Mammary epithelial cell (primary cell): ENCODE measurements at regions of chr20 and their contacts with region 1.

Region 1: GRCh38 chr20:3059489-3059888 is 11.9 kb upstream of the OXT start:
- DNase-seq: no peak
- H3K4me3 ChIP-seq: no peak overlapping the region
- H3K27ac ChIP-seq: no peak overlapping the region
- H3K4me1 ChIP-seq: no peaks in the 10 kb centered on the region
- H3K27me3 ChIP-seq: no peaks in the 10 kb centered on the region
- CTCF ChIP-seq: no peak

Region 2: GRCh38 chr20:2507464-2507863 is 552.0 kb before region 1 on chr20:
- CTCF ChIA-PET with region 1: no interaction called
- dilution Hi-C with region 1: no loop called
- in situ Hi-C with region 1: no loop called
- intact Hi-C with region 1: no loop called
- DNase-seq: no peak
- H3K4me3 ChIP-seq: peak overlapping the region in 2 of 3 experiments; percentile 73 to 84
- H3K27ac ChIP-seq: peak overlapping the region; percentile 43
- H3K4me1 ChIP-seq: peaks cover 7% of the 10 kb centered on the region
- H3K27me3 ChIP-seq: no peaks in the 10 kb centered on the region
- CTCF ChIP-seq: no peak

Region 3: GRCh38 chr20:3010985-3011723 is 48.3 kb before region 1 on chr20:
- CTCF ChIA-PET with region 1: no interaction called
- dilution Hi-C with region 1: no loop called
- in situ Hi-C with region 1: no loop called
- intact Hi-C with region 1: no loop called
- DNase-seq: peak; percentile 68
- H3K4me3 ChIP-seq: no peak overlapping the region
- H3K27ac ChIP-seq: no peak overlapping the region
- H3K4me1 ChIP-seq: peaks cover 9% of the 10 kb centered on the region
- H3K27me3 ChIP-seq: no peaks in the 10 kb centered on the region
- CTCF ChIP-seq: no peak

Region 4: DNA sequence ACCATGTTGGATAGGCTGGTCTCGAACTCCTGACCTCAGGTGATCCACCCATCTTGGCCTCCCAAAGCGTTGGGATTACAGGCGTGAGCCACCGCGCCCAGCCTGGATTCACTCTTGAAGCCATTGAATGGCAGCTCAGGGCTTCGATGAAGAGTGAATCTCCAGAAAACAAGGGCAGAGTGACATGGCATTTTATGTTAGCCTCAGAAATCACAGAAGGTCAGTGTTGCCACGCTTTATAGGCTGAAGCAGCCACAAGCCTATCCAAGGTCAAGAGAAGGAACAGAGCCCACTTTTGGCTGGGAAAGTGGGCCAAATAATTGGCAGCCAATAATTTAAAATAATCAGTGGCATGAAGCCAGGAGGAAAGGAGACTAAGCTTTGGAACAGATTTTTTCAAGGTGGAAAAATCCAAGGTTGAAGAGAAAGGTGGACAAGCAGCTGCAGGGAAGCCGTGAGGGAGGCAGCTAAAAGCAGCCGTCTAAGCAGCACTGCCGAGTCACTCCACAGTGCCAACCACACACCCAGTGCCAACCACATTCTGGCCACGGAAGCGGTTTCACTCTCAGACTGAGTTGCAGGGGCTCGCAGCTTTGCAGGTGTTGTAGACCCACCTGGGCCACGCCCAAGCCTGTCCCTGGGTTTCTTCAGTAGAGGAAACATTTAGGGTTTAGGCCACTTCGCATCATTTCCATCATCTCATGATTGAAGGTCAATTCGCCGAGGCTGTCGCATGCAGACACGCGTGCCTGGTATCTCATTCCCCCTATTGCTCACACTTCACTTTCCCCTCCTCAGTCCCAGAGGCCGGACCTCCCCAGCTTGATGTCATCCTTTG is 42.5 kb after region 1 on chr20:
- CTCF ChIA-PET with region 1: interaction called, 7 read pairs
- dilution Hi-C with region 1: loop called (anchors 5 kb)
- in situ Hi-C with region 1: no loop called
- intact Hi-C with region 1: no loop called
- DNase-seq: no peak
- H3K4me3 ChIP-seq: no peak overlapping the region
- H3K27ac ChIP-seq: no peak overlapping the region
- H3K4me1 ChIP-seq: no peaks in the 10 kb centered on the region
- H3K27me3 ChIP-seq: no peaks in the 10 kb centered on the region
- CTCF ChIP-seq: no peak

Region 5: DNA sequence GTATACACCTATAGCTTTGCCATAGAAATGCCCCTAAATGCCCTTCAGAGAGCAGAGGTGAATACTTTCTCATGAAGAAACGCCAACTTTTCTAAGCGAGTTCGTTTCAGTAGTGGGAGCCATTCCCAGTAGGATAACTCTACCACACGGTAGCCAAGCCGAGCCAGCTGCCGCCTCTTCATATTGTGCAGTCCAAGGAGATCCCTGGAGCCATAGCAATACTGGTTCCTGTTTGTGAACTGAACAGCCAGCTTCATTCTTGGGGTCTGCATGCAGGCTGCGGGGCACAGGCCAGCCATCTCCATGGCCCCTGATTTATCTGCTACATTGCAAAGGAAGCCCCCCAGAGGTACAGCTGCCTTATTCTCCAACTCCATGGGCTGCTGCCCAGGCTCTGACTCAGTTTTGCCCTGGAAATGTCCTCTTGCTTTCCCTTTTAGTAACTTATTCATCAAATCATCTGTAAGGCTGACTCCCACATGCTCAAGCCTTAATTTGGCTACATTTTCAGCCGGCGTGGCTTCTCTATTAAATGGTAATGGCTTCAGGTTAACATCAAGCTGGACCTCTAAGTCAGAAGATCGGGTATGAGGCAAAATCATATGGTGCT is 87.3 kb after region 1 on chr20:
- CTCF ChIA-PET with region 1: no interaction called
- dilution Hi-C with region 1: loop called (anchors 5 kb)
- in situ Hi-C with region 1: no loop called
- intact Hi-C with region 1: no loop called
- DNase-seq: no peak
- H3K4me3 ChIP-seq: no peak overlapping the region
- H3K27ac ChIP-seq: no peak overlapping the region
- H3K4me1 ChIP-seq: no peaks in the 10 kb centered on the region
- H3K27me3 ChIP-seq: no peaks in the 10 kb centered on the region
- CTCF ChIP-seq: no peak